Right ventricle myocardium superior (tissue), 1 donor: ENCODE measurements at regions of chr17 and their contacts with region 1.

Region 1: GRCh38 chr17:39517224-39517623 is 55.9 kb downstream of the CDK12 start:
- DNase-seq: no peak
- ATAC-seq: no peak

Region 2: DNA sequence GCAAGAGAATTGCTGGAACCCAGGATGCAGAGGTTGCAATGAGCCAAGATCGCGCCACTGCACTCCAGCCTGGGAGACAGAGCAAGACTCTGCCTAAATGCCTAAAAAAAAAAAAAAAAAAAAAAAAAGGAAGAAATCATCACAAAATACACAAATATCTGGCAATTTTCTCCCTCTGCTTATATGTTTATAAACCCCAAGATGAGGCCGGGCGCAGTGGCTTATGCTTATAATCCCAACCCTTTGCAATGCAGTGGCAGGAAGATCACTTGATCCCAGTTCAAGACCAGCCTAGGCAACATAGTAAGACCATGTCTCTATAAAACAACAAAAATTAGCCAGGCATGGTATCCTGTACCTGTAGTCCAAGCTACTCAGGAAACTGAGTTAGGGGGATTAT is 87.6 kb before region 1 on chr17:
- intact Hi-C with region 1: loop called (anchors 10 kb)
- DNase-seq: no peak
- ATAC-seq: no peak

Region 3: DNA sequence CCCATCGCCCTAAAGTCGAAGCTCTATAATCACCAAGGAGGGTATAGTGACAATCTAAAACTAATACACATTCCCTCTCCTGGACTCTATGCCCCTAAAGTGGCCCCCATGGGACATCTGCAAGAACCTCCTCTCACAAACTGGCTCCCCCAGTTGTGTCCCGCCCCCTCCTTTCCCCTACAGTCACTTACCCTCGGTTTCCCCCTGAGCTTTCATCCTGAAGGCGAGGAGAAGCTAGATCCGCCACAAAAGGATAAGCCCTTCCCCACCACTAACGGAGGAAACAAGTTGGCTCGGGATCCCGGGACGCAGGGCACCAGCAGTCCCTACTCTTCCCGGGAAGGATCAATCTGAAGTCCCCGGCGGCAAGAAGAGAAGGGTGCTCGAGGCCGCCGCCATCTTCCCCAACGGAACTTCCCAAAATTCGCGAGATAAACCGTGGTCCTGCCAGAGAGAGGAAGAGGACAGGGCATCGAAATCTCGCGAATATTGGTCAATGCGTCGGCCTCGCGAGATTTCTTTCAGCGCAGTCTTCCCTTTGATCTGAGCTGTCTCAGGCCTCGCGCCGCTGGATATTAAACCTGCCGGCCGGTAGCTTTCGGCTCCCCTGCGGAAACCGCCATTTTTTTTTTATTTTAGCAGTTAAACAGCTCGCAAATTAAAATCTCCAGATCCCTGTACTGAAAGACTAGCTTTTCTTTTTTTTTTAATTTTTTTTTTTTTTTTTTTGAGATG is 66.2 kb before region 1 on chr17 and contains the start of gene MED1:
- intact Hi-C with region 1: no loop called
- DNase-seq: peak; percentile 96
- ATAC-seq: peak; percentile 99
- total RNA-seq, gene MED1: 21.2 TPM

Region 4: DNA sequence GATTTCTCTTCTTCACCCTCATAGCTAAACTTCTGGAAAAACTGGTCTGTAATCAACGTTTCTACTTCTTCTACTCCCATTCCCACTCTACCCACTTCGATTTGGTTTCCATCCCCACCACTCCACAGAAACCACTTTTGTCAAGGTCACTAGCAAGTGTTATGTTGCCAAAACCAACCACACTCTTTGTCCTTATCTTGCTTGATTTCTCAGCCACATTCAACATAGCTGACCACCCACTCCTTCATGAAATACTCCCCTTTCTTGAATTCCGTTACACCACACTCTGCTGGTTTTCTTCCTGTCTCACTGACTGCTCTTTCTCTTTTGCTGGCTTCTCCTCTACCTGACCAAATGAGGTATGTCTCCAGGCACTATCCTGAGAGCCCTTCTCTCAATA is 335.0 kb after region 1 on chr17:
- intact Hi-C with region 1: no loop called
- DNase-seq: no peak
- ATAC-seq: no peak